ENCODE measurements at regions of chr9 and their contacts with region 1.

Region 1: DNA sequence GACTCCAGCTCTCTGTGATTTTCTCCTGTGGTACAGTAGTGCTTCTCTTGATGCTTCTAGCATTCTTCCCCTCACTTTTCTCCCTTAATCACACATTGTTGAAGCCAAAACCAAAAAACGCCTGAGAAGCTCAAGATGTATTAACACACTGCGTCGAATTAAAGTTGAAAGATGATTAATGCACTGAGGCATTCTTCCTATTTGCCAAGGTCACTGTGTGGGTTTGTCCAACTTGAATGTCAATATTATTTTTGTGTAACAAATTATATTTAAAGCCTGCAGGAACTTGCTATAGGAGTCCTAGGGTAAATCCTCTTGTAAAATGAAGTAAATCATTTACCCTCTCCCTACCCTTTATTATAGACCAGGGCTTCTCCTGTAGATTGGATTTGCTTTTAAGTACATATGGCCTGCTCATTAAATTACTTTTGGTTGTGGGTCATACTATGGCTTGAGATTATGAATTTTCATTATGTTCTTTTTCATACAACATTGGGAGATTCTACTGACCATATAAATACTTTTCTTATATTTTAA is 68.1 kb downstream of the GDA start:
- DNase-seq: no peak
- H3K4me3 Mint-ChIP-seq: no peak overlapping the region
- H3K27ac Mint-ChIP-seq: peak overlapping the region; percentile 45
- H3K4me1 Mint-ChIP-seq: peaks cover 14% of the 10 kb centered on the region
- H3K27me3 Mint-ChIP-seq: no peaks in the 10 kb centered on the region
- CTCF ChIP-seq: no peak

Region 2: GRCh38 chr9:72139233-72139632 is 78.1 kb before region 1 on chr9:
- CTCF ChIA-PET with region 1: no interaction called
- intact Hi-C with region 1: loop called (anchors 5 kb)
- DNase-seq: no peak
- H3K4me3 Mint-ChIP-seq: peak overlapping the region; percentile 20
- H3K27ac Mint-ChIP-seq: peak overlapping the region; percentile 87
- H3K4me1 Mint-ChIP-seq: peaks cover 33% of the 10 kb centered on the region
- H3K27me3 Mint-ChIP-seq: no peaks in the 10 kb centered on the region
- CTCF ChIP-seq: no peak

Region 3: GRCh38 chr9:72154468-72155281 is 62.7 kb before region 1 on chr9:
- CTCF ChIA-PET with region 1: no interaction called
- intact Hi-C with region 1: loop called (anchors 1 kb)
- DNase-seq: peak; percentile 44
- H3K4me3 Mint-ChIP-seq: peak overlapping the region; percentile 52
- H3K27ac Mint-ChIP-seq: peak overlapping the region; percentile 92
- H3K4me1 Mint-ChIP-seq: peaks cover 28% of the 10 kb centered on the region
- H3K27me3 Mint-ChIP-seq: no peaks in the 10 kb centered on the region
- CTCF ChIP-seq: no peak